Right ventricle myocardium superior (tissue), 1 donor: ENCODE measurements at regions of chr4 and their contacts with region 1.

Region 1: GRCh38 chr4:185640811-185641675 is 105.7 kb upstream of the PDLIM3 start:
- DNase-seq: no peak
- ATAC-seq: no peak

Region 2: GRCh38 chr4:185437809-185438208 is 203.2 kb before region 1 on chr4:
- intact Hi-C with region 1: no loop called
- DNase-seq: no peak
- ATAC-seq: no peak

Region 3: GRCh38 chr4:185896823-185897488 is 255.9 kb after region 1 on chr4:
- intact Hi-C with region 1: no loop called
- DNase-seq: no peak
- ATAC-seq: no peak

Region 4: DNA sequence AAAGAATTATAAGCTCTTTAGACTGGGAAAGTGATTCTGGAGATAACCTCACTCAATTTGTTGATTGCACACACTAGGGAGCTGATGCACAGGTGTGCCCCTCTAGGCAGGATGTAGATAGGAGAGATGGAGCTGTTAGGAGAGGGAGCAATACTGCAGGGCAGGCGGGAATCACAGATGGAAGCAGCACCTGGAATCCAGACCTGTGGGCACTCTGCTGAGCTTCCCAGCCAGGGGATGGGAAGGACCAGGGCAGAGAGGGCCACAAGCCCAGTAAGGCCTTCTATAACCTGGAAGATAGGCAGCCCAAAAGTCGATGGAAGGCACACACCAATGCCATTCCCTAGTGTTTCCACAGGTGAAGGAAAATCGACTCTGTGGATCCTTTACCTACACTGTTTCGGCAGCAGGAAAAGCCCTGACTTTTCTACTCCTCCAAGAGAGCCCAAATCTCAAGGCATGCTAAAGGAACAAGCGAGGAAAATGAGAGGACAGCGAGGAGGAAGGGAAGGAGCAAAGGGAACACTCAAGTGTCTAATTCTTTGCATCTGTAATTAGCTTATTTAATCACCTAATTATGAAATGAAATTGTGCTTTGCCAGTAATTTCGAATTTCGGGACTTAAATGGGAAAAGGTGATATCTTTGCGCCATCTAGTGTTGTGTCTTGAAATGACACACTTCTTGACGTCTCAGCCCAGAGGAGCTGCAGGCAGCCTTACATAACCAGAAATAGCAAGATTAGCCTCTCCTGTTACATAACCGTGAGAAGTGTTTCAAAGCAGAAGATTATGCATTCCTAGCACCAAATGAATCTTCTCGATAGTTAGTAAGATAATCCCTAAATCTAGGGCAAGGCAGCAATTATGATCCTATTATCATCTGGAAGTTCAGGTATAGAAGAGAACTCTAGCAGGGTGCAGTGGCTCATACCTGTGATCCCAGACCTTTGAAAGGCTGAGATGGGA is 396.9 kb after region 1 on chr4:
- intact Hi-C with region 1: loop called (anchors 5 kb)
- DNase-seq: no peak
- ATAC-seq: peak; percentile 91